Activated CD4-positive, alpha-beta T cell treated with anti-CD3 and anti-CD28 coated beads, Interleukin-2, amount 10 ng/mL, durations not matched to agents 24 days and 14 days (primary cell): ENCODE measurements at regions of chr2 and their contacts with region 1.

Region 1: DNA sequence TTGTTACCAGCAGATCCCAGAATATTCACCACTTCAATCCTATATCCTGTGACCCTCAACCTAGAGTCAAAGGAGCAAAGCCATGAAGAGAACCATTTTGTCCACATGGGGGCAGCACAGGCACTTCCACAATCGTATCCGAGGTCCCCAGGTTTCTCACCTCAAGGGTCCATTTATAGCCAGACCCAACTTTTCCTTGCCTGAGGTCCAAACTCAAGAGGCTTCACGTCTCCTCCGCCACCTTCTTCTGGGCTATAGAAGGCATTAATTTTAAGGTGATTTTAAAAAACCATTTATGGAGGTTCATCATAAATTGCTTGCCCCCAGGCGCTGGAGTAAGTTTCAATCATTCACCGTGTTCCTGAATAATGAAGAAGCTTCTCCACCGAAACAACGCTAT is 111.6 kb upstream of the NABP1 start:
- DNase-seq: peak; percentile 89
- H3K4me3 Mint-ChIP-seq: no peak overlapping the region
- H3K27ac Mint-ChIP-seq: no peak overlapping the region
- H3K4me1 Mint-ChIP-seq: peaks cover 29% of the 10 kb centered on the region
- H3K27me3 Mint-ChIP-seq: peaks cover 59% of the 10 kb centered on the region

Region 2: DNA sequence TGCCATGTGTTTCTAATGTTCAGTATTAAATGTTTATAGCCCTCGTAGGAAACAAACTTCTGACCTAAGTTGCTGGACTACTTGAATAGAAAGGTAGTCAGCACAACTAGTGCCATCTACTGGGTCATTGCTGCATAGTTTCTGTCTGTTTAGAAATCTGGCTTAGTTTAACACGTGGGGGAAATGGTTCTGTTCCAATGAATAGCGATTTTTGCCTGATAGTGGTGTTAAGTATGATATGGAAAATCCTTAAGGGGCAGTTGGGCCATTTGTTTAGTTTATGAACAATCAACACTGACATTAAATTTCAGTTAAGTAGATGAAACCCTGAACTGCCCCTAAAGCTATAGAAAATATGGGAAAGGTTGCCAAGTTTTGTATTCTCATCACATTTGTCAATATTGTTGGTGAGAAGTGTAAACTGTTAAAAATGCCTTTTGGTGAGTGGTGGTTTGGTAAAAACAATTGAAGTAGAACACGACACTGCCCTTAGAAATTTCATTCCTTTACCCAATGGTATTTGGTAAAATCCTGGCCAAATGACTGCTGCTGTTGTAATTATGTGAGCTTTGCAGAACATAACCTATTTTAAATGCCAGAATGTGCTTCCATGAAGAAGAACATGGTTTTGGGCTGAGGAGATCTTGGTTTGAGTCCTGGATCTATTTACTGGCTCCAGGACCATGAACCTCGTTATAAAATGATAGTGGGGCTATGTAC is 124.8 kb after region 1 on chr2:
- intact Hi-C with region 1: loop called (anchors 1 kb)
- DNase-seq: peak; percentile 88
- H3K4me3 Mint-ChIP-seq: no peak overlapping the region
- H3K27ac Mint-ChIP-seq: no peak overlapping the region
- H3K4me1 Mint-ChIP-seq: peaks cover 31% of the 10 kb centered on the region
- H3K27me3 Mint-ChIP-seq: no peaks in the 10 kb centered on the region

Region 3: DNA sequence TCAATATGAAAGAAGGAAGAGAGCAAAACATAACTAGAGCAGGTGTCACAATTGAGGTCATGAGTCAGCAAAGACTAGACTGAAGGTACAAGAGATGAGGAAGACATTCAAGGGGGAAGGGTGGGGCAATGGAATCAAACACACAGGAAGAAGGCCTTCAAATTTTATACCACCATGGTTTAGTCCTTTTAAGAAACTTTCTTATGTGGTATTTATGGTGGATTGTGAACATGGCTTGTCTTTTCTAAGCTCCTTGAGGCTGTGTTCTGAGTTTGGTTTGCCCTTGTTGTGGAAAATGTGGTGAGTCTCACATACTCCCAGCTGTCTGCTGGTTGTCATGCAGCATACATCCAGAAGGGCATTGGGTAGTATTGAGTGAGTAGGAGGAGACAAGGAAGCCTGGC is 173.7 kb after region 1 on chr2:
- intact Hi-C with region 1: loop called (anchors 2 kb)
- DNase-seq: peak; percentile 91
- H3K4me3 Mint-ChIP-seq: peak overlapping the region; percentile 16
- H3K27ac Mint-ChIP-seq: peak overlapping the region; percentile 82
- H3K4me1 Mint-ChIP-seq: peaks cover 13% of the 10 kb centered on the region
- H3K27me3 Mint-ChIP-seq: peaks cover 30% of the 10 kb centered on the region

Region 4: DNA sequence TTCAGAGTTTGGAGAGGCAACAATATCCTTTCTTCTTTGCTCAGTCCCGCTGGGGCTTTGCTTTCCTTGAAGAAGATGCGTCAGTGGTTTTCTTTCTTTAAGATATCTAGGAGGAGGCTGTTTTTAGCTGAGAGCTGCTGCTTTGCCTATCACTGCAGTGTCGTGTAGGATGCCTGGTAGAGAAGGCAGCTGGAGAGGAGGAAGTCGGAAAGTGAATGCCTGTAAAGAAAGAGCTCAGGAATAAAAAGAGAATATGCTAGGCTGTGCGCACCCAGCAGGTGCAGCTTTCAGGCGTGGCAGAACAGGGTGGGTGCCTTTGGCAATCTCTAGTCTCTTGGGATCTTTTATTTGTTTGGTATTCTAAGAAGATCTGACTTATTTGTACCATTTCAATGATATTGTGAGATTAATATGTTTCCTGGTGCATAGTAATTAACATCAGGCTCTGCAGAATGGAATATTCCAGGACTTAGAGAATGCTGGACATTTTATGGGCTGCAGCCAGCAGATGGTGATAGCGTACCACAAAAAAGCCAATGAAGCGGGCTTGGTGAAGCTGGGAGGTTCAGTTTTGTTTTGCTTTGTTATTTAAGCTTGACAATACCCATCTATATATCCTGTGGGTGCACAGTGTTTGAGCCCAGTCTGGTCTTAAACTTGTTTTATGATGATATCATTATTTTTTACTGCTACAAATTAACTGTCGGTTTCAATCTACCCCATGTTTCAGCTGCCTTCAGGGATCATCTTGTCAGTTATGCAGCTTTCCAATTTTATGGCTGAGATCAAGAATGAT is 245.7 kb after region 1 on chr2:
- intact Hi-C with region 1: loop called (anchors 5 kb)
- DNase-seq: peak; percentile 76
- H3K4me3 Mint-ChIP-seq: no peak overlapping the region
- H3K27ac Mint-ChIP-seq: no peak overlapping the region
- H3K4me1 Mint-ChIP-seq: no peaks in the 10 kb centered on the region
- H3K27me3 Mint-ChIP-seq: peaks cover 18% of the 10 kb centered on the region